HepG2 (cell line): ENCODE measurements at regions of chr5 and their contacts with region 1.

Region 1: DNA sequence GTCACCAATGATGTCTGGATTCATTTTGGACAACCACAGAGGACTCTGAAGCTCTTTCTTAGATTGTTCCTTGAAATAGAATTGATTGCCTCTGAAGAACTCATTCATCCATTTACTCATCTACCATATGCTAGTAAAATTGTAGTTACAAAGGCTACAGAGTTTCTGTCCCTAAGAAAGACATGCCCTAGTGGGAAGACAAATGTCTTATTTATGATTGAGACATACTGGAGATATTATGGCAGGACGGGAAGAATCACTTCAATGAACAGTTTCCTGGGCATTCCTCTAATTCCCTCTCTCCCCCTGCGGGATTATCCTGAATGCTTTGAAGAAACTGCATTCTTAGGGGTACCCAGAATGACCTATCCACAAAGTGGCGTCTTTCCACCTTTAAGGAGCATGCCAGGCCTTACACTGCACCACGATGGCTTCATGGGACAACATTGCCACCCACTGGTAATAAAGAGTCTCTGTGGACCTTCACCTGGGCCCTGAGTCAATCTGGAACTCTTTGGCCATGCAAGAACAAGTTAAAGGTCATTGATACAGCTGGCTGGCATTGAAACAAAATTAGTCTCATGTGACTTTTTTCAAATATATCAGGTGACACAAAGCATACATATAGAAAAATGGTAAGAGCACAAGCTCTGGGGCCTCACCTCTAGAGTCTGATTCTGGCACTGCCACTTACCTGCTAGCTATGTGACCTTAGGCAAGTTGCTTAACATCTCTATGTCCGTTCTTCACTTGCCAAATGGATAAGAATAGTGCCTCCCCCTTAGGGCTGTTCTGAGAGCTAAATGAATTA is 32.1 kb downstream of the ANKRD55 start:
- DNase-seq: peak; percentile 88
- ATAC-seq: peak; percentile 99
- H3K4me3 ChIP-seq: no peak overlapping the region
- H3K27ac ChIP-seq: no peak overlapping the region
- H3K4me1 ChIP-seq: peaks cover 38% of the 10 kb centered on the region
- H3K27me3 ChIP-seq: no peaks in the 10 kb centered on the region
- CTCF ChIP-seq: peak; percentile 96
- EP300 ChIP-seq: no peak
- POLR2A ChIP-seq: no peak
- RAD21 ChIP-seq: peak; percentile 96

Region 2: GRCh38 chr5:55691265-55692105 is 509.6 kb before region 1 on chr5:
- CTCF ChIA-PET with region 1: no interaction called
- POLR2A ChIA-PET with region 1: no interaction called
- in situ Hi-C with region 1: no loop called
- intact Hi-C with region 1: loop called (anchors 2 kb)
- DNase-seq: peak; percentile 63
- ATAC-seq: peak; percentile 91
- H3K4me3 ChIP-seq: peak overlapping the region in 2 of 3 experiments; percentile 22 to 25; a peak in 2 of 6 replicates
- H3K27ac ChIP-seq: peak overlapping the region; percentile 46
- H3K4me1 ChIP-seq: peaks cover 32% of the 10 kb centered on the region
- H3K27me3 ChIP-seq: no peaks in the 10 kb centered on the region; a peak in 1 of 5 replicates
- CTCF ChIP-seq: peak; percentile 65
- EP300 ChIP-seq: peak in 1 of 2 experiments; percentile 36; a peak in 1 of 4 replicates
- POLR2A ChIP-seq: no peak
- RAD21 ChIP-seq: 0 out of 2 replicates have a peak, but pooled peaks have one; percentile 38

Region 3: GRCh38 chr5:55982957-55983381 is 218.1 kb before region 1 on chr5:
- CTCF ChIA-PET with region 1: interaction called, 12 read pairs
- POLR2A ChIA-PET with region 1: interaction called, 3 read pairs
- in situ Hi-C with region 1: no loop called
- intact Hi-C with region 1: loop called (anchors 1 kb)
- DNase-seq: no peak
- ATAC-seq: peak; percentile 79
- H3K4me3 ChIP-seq: no peak overlapping the region
- H3K27ac ChIP-seq: no peak overlapping the region
- H3K4me1 ChIP-seq: peaks cover 61% of the 10 kb centered on the region
- H3K27me3 ChIP-seq: no peaks in the 10 kb centered on the region; a peak in 1 of 5 replicates
- CTCF ChIP-seq: peak; percentile 54
- EP300 ChIP-seq: no peak
- POLR2A ChIP-seq: no peak
- RAD21 ChIP-seq: peak; percentile 38; the same call in 1 of the 2 replicates

Region 4: DNA sequence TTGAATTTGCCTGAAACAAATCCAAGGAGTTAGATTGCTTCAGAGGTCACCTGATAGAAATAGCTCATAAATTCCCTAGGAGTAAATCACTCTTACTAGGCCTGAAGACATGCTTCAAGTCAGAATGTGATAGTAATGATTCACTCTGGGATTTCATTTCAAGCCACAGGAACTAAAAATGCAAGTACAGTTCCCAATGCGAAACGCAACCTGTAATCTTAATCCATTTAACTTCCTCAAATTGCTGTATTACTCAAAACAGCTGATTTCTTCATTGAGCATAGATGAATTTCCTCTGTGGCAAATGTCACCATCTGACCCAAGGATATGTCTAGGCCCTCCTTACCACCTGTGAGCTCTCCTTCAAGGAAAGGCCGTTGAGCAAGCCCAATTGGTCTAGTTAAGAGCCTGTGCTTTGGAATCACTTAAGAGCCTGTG is 174.2 kb before region 1 on chr5:
- CTCF ChIA-PET with region 1: no interaction called
- POLR2A ChIA-PET with region 1: no interaction called
- in situ Hi-C with region 1: no loop called
- intact Hi-C with region 1: loop called (anchors 2 kb)
- DNase-seq: no peak
- ATAC-seq: no peak
- H3K4me3 ChIP-seq: no peak overlapping the region
- H3K27ac ChIP-seq: peak overlapping the region; percentile 47
- H3K4me1 ChIP-seq: peaks cover 63% of the 10 kb centered on the region
- H3K27me3 ChIP-seq: no peaks in the 10 kb centered on the region
- CTCF ChIP-seq: no peak
- EP300 ChIP-seq: no peak
- POLR2A ChIP-seq: no peak
- RAD21 ChIP-seq: no peak

Region 5: DNA sequence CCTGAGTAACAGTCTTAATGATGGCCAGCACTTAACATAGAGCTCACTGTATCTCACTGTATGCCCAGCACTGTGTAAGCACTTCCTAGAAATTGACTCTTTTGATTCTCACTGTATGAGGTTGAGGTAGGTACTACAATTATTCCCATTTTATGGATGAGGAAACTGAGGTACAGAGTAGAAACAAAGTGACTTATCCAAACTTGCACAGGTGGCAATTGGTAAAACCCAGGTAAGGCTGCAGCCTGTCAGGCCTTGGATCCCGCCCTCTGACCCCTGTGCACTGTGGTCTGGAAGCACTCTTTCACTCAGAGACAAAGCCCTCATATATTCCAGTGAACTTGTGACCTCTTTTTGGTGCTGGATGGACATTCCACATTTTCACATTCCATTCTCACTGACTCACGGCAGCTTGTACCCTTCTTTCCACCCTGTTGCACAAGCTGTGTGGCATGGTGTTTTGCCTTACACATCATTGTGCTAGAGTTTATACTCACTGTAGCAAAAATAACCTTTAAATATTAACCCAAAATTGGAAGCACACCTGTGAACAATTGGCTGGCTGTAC is 10.3 kb after region 1 on chr5:
- CTCF ChIA-PET with region 1: no interaction called
- POLR2A ChIA-PET with region 1: interaction called, 5 read pairs
- in situ Hi-C with region 1: no loop called
- intact Hi-C with region 1: loop called (anchors 1 kb)
- DNase-seq: peak; percentile 99
- ATAC-seq: peak; percentile 93
- H3K4me3 ChIP-seq: peak overlapping the region in 1 of 3 experiments; percentile 4; a peak in 1 of 6 replicates
- H3K27ac ChIP-seq: peak overlapping the region; percentile 80
- H3K4me1 ChIP-seq: peaks cover 70% of the 10 kb centered on the region
- H3K27me3 ChIP-seq: no peaks in the 10 kb centered on the region
- CTCF ChIP-seq: peak; percentile 12; the same call in 1 of the 2 replicates
- EP300 ChIP-seq: peak; percentile 75 to 93
- POLR2A ChIP-seq: no peak
- RAD21 ChIP-seq: no peak; the same call in 1 of the 2 replicates

Region 6: GRCh38 chr5:56310711-56311204 is 109.7 kb after region 1 on chr5:
- CTCF ChIA-PET with region 1: no interaction called
- POLR2A ChIA-PET with region 1: no interaction called
- in situ Hi-C with region 1: no loop called
- intact Hi-C with region 1: no loop called
- DNase-seq: no peak
- ATAC-seq: no peak
- H3K4me3 ChIP-seq: no peak overlapping the region
- H3K27ac ChIP-seq: no peak overlapping the region
- H3K4me1 ChIP-seq: peaks cover 50% of the 10 kb centered on the region
- H3K27me3 ChIP-seq: no peaks in the 10 kb centered on the region
- CTCF ChIP-seq: no peak
- EP300 ChIP-seq: no peak
- POLR2A ChIP-seq: no peak
- RAD21 ChIP-seq: no peak